Activated CD4-positive, alpha-beta memory T cell treated with anti-CD3 and anti-CD28 coated beads, Interleukin-2, amount 10 ng/mL, durations not matched to agents 7 days and 5 days (primary cell): ENCODE measurements at regions of chr5 and their contacts with region 1.

Region 1: GRCh38 chr5:56698463-56699381 is 116.6 kb upstream of the MAP3K1 start:
- DNase-seq: no peak
- H3K4me3 Mint-ChIP-seq: no peak overlapping the region
- H3K27ac Mint-ChIP-seq: peak overlapping the region; percentile 73
- H3K4me1 Mint-ChIP-seq: peaks cover 62% of the 10 kb centered on the region
- H3K27me3 Mint-ChIP-seq: peaks cover 2% of the 10 kb centered on the region

Region 2: DNA sequence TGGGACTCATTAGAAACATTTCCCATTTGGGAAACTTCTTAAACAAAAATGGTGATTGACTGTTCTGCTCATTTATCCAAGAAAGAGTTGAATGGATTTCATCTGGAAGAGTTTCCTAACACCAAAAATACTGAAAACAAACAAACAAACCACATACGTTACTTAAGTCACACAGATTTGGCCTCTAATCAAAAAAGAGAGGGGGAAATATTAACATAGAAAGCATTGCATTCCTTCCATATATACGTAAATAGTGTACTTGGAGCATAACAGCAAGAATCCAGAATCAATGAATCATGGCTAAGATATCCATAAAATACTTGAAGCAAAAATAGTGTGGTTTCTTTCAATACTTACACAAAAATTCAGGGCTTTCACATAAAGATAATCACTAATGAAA is 73.2 kb before region 1 on chr5:
- CTCF ChIA-PET with region 1: no interaction called
- POLR2A ChIA-PET with region 1: no interaction called
- DNase-seq: no peak
- H3K4me3 Mint-ChIP-seq: no peak overlapping the region
- H3K27ac Mint-ChIP-seq: no peak overlapping the region
- H3K4me1 Mint-ChIP-seq: no peaks in the 10 kb centered on the region
- H3K27me3 Mint-ChIP-seq: peaks cover 8% of the 10 kb centered on the region

Region 3: DNA sequence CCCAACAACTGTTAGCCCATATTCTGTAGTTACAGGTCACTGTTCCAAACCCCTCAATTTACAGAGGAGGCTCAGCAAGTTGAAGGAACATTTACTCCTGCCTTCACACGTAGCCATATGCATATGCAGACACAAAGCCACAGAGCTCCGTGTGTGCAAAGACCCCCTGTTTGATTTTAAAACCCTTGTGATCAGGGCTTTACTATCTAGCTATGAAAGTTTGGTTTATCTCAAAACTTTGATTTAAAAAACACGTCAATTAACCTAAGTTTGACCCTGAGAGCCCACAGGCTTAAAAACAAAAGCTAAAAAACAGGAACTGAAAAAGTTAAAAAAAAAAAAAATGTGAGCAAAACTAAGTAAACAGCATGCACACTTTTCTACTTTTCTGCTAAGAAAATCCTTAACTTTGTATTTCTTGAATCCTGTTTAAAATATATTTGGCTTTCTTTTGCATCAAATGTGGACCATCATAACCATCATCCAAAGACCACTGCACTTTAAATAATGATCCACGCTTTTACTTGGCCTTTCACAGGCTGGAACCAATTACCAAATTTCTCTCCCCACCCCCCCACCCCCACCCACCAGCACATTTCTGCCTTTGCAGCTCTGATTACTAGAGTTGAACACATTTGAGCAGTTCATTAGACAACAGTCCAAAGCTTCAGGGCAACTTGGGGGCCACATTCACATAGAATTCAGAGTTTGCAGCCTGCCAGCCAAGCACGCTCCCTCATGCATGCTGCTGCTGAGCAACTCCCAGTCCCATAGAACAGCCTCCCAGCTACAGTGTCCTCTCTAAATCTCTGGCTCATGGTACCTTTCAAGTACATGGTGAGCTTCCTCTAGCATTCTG is 12.2 kb before region 1 on chr5:
- CTCF ChIA-PET with region 1: interaction called, 8 read pairs
- POLR2A ChIA-PET with region 1: interaction called, 23 read pairs
- DNase-seq: no peak
- H3K4me3 Mint-ChIP-seq: no peak overlapping the region
- H3K27ac Mint-ChIP-seq: peak overlapping the region; percentile 47
- H3K4me1 Mint-ChIP-seq: peaks cover 46% of the 10 kb centered on the region
- H3K27me3 Mint-ChIP-seq: no peaks in the 10 kb centered on the region

Region 4: GRCh38 chr5:56737002-56737621 is 38.4 kb after region 1 on chr5:
- CTCF ChIA-PET with region 1: no interaction called
- POLR2A ChIA-PET with region 1: interaction called, 14 read pairs
- DNase-seq: peak; percentile 21
- H3K4me3 Mint-ChIP-seq: peak overlapping the region; percentile 5
- H3K27ac Mint-ChIP-seq: peak overlapping the region; percentile 75
- H3K4me1 Mint-ChIP-seq: peaks cover 30% of the 10 kb centered on the region
- H3K27me3 Mint-ChIP-seq: no peaks in the 10 kb centered on the region